Astrocyte of the cerebellum (primary cell): ENCODE measurements at regions of chr1 and their contacts with region 1.

Region 1: GRCh38 chr1:21956720-21957552 is 19.8 kb upstream of the HSPG2 start:
- DNase-seq: no peak
- H3K4me3 ChIP-seq: no peak overlapping the region
- CTCF ChIP-seq: no peak

Region 2: GRCh38 chr1:21539933-21540332 is 417.0 kb before region 1 on chr1:
- in situ Hi-C with region 1: loop called (anchors 10 kb)
- DNase-seq: no peak
- H3K4me3 ChIP-seq: no peak overlapping the region
- CTCF ChIP-seq: peak; percentile 54

Region 3: DNA sequence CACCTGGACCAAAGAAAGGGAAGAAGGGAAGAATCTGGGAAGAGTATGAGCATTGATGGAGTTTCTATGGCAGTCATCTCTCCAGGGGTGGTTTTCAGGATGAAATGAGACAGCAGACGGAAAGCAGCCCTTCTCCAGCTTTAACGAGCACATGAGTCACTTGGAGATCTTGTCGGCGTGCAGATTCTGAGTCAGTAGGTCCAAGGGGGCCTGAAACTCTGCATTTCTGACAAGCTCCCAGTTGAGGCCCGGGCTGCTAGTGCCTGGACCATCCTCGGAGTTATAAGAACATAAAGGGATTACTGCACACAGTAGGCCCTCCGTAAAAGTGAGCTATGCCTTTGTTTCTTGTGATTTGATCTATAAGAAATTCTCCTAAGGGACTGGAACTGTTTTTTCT is 37.4 kb before region 1 on chr1:
- in situ Hi-C with region 1: no loop called
- DNase-seq: no peak
- H3K4me3 ChIP-seq: no peak overlapping the region
- CTCF ChIP-seq: no peak